ENCODE measurements at regions of chr12 and their contacts with region 1.

Region 1: DNA sequence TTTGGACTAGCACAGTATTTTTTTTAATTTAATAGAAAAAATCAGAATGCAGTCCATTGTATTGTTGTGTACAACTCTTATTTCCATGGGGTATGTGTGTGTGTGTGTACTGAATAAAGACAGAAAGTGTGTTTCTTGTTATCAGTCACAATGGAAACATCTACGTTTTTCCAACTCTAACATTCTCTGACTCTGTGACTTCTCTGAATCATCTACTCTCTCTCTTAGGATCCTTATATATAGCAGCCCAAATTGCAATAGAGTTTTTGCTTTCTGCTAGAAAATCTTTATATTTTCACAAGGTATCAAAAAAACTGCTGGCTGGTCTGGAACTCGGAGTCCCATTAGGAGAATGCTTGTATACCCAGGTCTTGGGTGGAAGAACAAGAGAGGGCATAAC is 138.9 kb upstream of the ARID2 start:
- DNase-seq: no peak
- ATAC-seq: no peak
- H3K4me3 ChIP-seq: no peak overlapping the region
- H3K27ac ChIP-seq: no peak overlapping the region
- H3K4me1 ChIP-seq: peaks cover 8% of the 10 kb centered on the region; the same call in 1 of the 2 replicates
- H3K27me3 ChIP-seq: no peaks in the 10 kb centered on the region
- CTCF ChIP-seq: no peak

Region 2: DNA sequence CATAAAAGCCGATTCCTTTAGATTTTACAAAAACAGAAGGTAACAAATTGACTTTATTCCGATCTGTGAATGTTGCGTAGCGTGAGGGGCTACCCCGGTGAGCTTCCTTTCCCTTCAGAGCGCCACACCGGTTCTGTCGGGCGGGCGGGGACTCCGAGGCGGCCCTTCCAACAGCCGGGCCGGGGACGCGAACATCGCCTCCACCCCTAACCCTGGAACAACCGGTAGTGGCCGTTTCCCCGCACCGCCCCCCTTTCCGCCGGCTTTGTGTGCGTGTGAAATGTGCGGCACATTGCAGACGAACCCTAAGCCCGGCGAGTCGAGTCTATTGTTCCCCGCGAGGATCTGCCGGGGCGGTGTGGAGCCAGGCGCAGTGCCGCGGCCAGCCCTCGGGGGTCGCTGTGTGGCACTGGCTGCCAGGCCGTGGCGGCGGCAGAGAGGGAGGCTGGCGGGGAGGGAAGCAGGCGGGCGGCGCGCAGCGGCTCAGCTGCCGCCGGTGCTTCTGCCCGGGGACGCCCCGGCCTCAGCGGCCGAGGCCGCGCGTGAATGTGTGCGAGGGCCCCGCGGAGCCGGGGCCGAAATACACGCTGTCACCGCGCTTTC is 138.1 kb after region 1 on chr12:
- CTCF ChIA-PET with region 1: no interaction called
- POLR2A ChIA-PET with region 1: no interaction called
- intact Hi-C with region 1: no loop called
- DNase-seq: peak; percentile 93
- ATAC-seq: peak; percentile 54
- H3K4me3 ChIP-seq: peak overlapping the region; percentile 87
- H3K27ac ChIP-seq: peak overlapping the region; percentile 82
- H3K4me1 ChIP-seq: peaks cover 34% of the 10 kb centered on the region
- H3K27me3 ChIP-seq: no peaks in the 10 kb centered on the region
- CTCF ChIP-seq: peak; percentile 80

Region 3: GRCh38 chr12:45745861-45746277 is 155.2 kb after region 1 on chr12:
- CTCF ChIA-PET with region 1: interaction called, 10 read pairs
- POLR2A ChIA-PET with region 1: no interaction called
- intact Hi-C with region 1: no loop called
- DNase-seq: peak; percentile 45
- ATAC-seq: peak; percentile 45
- H3K4me3 ChIP-seq: no peak overlapping the region
- H3K27ac ChIP-seq: no peak overlapping the region
- H3K4me1 ChIP-seq: peaks cover 14% of the 10 kb centered on the region
- H3K27me3 ChIP-seq: no peaks in the 10 kb centered on the region
- CTCF ChIP-seq: peak; percentile 58